Activated naive CD4-positive, alpha-beta T cell treated with anti-CD3 and anti-CD28 coated beads for 36 hours (primary cell): ENCODE measurements at regions of chr15 and their contacts with region 1.

Region 1: DNA sequence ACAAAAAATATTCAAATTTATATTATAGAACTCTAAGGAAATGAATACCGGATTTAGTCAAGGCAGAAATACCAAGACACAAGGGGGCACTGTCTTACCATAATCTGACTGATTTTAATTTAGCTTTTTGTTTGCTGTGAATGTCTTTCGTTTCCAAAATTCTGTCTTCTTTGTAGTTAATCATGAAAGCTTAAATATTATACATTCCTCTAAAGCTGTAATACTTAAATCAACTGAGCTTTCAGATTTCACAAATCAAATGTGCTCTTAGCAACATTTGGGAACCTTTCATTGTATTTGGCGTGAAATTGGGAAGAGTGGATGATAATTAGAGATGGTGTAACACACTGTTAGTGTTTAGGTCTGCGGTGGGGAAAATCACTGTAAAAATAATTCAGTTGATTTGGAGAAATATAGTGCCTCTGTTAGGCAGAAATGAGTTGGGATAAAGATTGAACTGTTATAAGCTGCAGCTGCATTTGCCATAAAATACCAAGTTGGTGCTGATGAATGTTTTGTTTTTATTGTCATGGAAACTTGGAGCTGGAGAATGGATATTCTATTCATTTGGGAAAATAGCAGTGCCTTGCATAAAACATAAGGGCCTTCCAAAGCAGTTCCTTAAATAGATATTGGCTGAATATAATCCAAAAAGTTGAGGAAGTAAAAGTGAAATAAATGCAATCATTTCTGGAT is 228.2 kb downstream of the TCF12 start:
- DNase-seq: no peak
- H3K4me3 Mint-ChIP-seq: no peak overlapping the region
- H3K27ac Mint-ChIP-seq: no peak overlapping the region
- H3K4me1 Mint-ChIP-seq: peaks cover 6% of the 10 kb centered on the region
- H3K27me3 Mint-ChIP-seq: no peaks in the 10 kb centered on the region

Region 2: GRCh38 chr15:56491110-56491722 is 655.4 kb before region 1 on chr15:
- CTCF ChIA-PET with region 1: no interaction called
- intact Hi-C with region 1: loop called (anchors 10 kb)
- DNase-seq: peak; percentile 81
- H3K4me3 Mint-ChIP-seq: no peak overlapping the region
- H3K27ac Mint-ChIP-seq: no peak overlapping the region
- H3K4me1 Mint-ChIP-seq: no peaks in the 10 kb centered on the region
- H3K27me3 Mint-ChIP-seq: peaks cover 3% of the 10 kb centered on the region

Region 3: GRCh38 chr15:56835718-56836171 is 310.9 kb before region 1 on chr15:
- CTCF ChIA-PET with region 1: no interaction called
- intact Hi-C with region 1: no loop called
- DNase-seq: no peak
- H3K4me3 Mint-ChIP-seq: no peak overlapping the region
- H3K27ac Mint-ChIP-seq: no peak overlapping the region
- H3K4me1 Mint-ChIP-seq: peaks cover 6% of the 10 kb centered on the region
- H3K27me3 Mint-ChIP-seq: no peaks in the 10 kb centered on the region

Region 4: GRCh38 chr15:56984681-56985481 is 161.8 kb before region 1 on chr15:
- CTCF ChIA-PET with region 1: no interaction called
- intact Hi-C with region 1: no loop called
- DNase-seq: no peak
- H3K4me3 Mint-ChIP-seq: no peak overlapping the region
- H3K27ac Mint-ChIP-seq: no peak overlapping the region
- H3K4me1 Mint-ChIP-seq: peaks cover 59% of the 10 kb centered on the region
- H3K27me3 Mint-ChIP-seq: no peaks in the 10 kb centered on the region

Region 5: DNA sequence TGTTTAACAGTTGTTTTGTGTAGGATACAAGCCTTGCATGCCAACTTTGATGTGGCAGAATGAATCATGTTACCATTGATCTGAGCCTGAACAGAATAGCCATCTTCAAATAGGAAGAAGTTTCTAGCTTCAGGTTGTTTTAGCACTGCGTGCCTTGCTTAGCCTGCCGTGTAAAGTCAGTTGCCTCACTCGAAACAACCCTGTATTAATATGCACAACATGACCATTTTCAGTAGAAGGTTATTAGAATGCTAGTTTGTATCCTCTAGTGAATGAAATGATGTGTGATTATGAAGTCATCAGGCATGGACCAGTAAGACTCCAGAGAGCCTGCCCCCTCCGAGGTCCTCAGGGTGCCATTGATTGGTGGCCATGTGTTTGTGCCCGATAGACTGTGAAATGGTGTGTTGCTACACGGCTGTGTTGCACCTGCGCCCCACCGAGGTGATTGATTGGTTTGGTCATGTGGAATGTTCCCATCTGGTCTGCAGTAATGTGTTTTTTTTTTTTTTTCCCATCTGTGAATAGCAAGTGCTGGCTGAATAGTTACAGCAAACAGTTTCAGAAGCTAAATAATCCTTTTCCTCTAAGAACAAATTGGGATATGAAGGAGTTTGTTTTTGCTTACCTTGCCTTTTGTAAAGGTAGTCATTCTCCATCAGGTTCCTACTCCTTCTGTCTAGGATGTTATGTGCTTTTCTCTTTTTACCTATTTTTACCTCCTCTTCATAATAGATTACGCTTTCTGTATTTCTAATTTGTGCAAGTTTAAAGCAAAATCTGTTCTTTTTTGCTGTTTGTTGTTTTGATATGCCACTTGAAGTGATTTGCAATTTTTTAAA is 13.3 kb before region 1 on chr15:
- CTCF ChIA-PET with region 1: interaction called, 19 read pairs
- intact Hi-C with region 1: no loop called
- DNase-seq: peak; percentile 42
- H3K4me3 Mint-ChIP-seq: no peak overlapping the region
- H3K27ac Mint-ChIP-seq: no peak overlapping the region
- H3K4me1 Mint-ChIP-seq: peaks cover 45% of the 10 kb centered on the region
- H3K27me3 Mint-ChIP-seq: no peaks in the 10 kb centered on the region

Region 6: DNA sequence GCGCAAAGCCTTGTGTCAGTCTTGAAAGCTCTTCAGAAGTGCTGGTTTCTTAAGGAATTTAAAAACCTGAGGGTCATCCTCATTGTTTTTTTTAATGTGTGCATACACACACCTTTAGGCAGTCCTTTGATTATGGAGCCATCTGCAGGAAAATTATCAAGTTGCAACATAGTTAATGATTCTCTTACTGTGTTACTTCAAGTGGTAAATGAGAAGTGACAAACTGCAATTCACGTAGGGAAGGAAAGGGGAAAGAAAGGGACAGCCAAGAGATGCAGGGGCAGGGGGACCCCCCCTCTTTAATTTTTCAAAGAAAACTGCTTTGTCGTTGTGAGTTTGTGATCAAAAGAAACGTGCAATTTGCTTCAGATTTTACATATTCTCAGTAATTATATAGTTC is 67.2 kb after region 1 on chr15:
- CTCF ChIA-PET with region 1: interaction called, 13 read pairs
- intact Hi-C with region 1: loop called (anchors 2 kb)
- DNase-seq: no peak
- H3K4me3 Mint-ChIP-seq: no peak overlapping the region
- H3K27ac Mint-ChIP-seq: no peak overlapping the region
- H3K4me1 Mint-ChIP-seq: peaks cover 25% of the 10 kb centered on the region
- H3K27me3 Mint-ChIP-seq: no peaks in the 10 kb centered on the region